Activated T-helper 2 cell treated with anti-CD3 and anti-CD28 coated beads, Interferon-gamma antibody, Interleukin-2, Interleukin-4, amounts not matched to agents 10 μg/mL and 5 μg/mL and 100 μg/mL, durations not matched to agents 14 hours and 24 hours and 36 hours (primary cell): ENCODE measurements at regions of chr7 and their contacts with region 1.

Region 1: DNA sequence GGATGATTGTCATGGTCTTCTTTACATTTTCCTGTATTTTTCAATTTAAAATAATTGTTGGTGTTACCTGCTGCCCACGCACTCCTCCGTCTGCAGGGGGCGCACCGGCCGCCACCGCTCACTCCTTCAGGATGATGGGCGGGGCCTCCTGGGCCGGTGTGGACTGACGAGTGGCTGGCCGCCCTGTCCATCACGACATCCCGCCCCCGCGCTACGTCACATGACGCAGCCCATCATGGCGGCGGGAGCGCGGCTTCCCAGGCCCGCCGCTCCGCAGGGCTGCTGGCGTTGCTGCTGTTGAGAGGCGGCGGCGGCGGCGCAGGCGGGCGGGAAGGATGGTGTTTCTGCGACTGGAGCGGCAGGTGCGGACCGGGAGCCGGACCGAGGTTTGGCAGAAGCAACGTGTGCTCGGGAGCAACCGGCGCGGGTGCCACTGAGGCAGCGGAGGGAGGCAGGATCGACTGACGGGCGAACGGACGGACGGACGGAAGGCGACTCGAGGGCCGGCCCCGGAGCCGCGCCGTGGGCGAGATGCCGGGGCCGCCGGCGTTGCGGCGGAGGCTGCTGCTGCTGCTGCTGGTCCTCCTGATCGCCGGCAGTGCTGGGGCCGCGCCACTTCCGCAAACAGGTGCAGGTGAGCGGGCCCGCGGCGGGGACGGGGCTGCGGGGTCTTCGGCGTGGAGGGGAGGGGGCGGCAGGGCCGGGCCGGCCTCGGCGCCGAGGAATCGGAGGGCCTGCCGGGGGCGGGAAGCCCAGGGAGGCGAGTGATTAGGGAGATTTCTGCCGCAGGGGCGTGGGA is at the start of gene LMTK2:
- DNase-seq: peak; percentile 92
- H3K4me3 Mint-ChIP-seq: peak within 1 kb of the TSS; percentile 95
- H3K27ac Mint-ChIP-seq: peak within 1 kb of the TSS; percentile 87
- H3K4me1 Mint-ChIP-seq: peaks cover 20% of the 10 kb centered on the region
- H3K27me3 Mint-ChIP-seq: peaks cover 1% of the 10 kb centered on the region
- total RNA-seq, gene LMTK2: 14.7 and 15.0 TPM in 2 replicates

Region 2: DNA sequence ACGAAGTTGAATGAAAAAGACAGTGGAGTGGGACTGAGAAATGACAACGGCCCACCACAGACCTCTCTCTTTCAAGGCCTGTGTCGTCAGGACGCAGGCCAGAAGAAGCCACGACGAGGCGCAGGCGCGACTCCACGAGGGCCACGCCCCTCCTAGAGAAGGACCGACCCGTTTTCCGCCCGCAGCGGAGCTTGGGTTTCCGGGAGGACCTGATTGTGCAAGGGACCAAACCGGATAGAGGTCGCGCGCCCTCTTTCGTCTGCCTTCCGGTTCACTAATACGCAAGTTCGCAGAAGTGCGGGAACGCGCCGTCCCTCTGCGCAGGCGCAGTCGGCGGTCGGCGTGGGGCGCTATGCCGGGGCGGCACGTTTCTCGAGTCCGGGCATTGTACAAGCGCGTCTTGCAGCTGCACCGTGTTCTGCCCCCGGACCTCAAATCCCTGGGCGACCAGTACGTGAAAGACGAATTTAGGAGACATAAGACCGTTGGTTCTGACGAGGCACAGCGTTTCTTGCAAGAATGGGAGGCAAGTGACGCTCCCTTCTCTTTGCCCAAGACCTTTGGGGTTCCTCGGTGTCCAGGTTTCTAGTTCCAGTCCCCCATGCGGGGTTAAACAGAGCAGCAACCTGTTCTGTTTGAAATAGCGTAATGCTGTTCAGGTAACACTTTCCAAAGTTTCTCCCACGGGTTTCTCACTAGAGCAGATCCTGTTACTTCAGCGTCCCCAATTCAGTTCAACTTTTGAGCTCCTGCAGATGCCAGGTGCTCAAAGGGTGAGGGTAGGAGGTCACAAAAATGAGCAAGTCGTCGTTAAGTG is 989.3 kb before region 1 on chr7 and contains the start of gene SDHAF3:
- intact Hi-C with region 1: loop called (anchors 2 kb)
- DNase-seq: peak; percentile 97
- H3K4me3 Mint-ChIP-seq: peak within 1 kb of the TSS; percentile 95
- H3K27ac Mint-ChIP-seq: peak within 1 kb of the TSS; percentile 90
- H3K4me1 Mint-ChIP-seq: peaks cover 37% of the 10 kb centered on the region
- H3K27me3 Mint-ChIP-seq: no peaks in the 10 kb centered on the region
- total RNA-seq, gene SDHAF3: 23.7 and 26.9 TPM in 2 replicates

Region 3: GRCh38 chr7:97961908-97962307 is 144.9 kb before region 1 on chr7:
- intact Hi-C with region 1: no loop called
- DNase-seq: no peak
- H3K4me3 Mint-ChIP-seq: no peak overlapping the region
- H3K27ac Mint-ChIP-seq: no peak overlapping the region
- H3K4me1 Mint-ChIP-seq: no peaks in the 10 kb centered on the region
- H3K27me3 Mint-ChIP-seq: no peaks in the 10 kb centered on the region

Region 4: GRCh38 chr7:98091061-98091460 is 15.8 kb before region 1 on chr7:
- intact Hi-C with region 1: no loop called
- DNase-seq: no peak
- H3K4me3 Mint-ChIP-seq: no peak overlapping the region
- H3K27ac Mint-ChIP-seq: no peak overlapping the region
- H3K4me1 Mint-ChIP-seq: no peaks in the 10 kb centered on the region
- H3K27me3 Mint-ChIP-seq: peaks cover 6% of the 10 kb centered on the region

Region 5: GRCh38 chr7:98133181-98133580 is 26.3 kb after region 1 on chr7:
- intact Hi-C with region 1: loop called (anchors 2 kb)
- DNase-seq: no peak
- H3K4me3 Mint-ChIP-seq: peak overlapping the region; percentile 35
- H3K27ac Mint-ChIP-seq: peak overlapping the region; percentile 26
- H3K4me1 Mint-ChIP-seq: peaks cover 30% of the 10 kb centered on the region
- H3K27me3 Mint-ChIP-seq: peaks cover 12% of the 10 kb centered on the region

Region 6: DNA sequence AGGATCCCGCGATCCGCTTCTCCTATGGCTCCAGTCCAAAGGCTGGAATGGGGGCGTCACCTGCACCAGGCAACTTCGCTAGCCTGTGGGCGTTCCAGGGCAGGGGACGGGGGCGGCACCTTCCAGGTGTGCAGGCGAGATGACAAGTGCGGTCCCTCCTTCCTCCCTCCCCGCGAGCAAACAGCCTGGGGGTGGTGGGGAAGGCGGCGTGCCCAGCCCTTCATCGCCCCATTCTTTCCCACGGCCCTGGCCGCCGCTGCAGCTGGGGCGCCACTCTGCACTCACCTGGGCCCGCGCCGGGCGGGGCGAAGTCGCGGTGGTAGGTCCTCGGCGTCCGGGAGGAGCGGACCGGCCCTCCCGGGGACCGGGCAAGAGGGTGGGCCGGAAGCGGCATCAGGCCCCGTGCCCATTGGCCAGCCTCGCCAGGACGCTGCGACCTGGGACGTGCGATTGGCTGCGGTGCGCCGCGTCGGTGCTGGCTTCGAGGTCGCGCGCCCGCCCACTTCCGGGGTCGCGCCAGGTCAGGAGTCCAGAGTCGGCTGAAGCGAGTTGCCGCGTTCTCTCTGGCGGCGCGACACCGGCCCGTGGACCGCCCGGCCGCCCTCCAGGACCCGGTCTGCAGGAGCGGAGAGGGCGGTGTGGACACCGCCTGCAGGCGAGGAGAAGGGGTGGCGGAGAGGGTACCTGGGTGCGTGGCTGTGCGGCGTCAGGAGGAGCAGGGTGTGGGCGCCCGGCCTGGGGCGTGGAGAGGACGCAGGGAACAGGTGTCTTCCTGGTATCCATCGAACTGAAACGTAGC is 145.2 kb after region 1 on chr7 and contains the start of gene TECPR1:
- intact Hi-C with region 1: loop called (anchors 5 kb)
- DNase-seq: peak; percentile 90
- H3K4me3 Mint-ChIP-seq: peak within 1 kb of the TSS; percentile 98
- H3K27ac Mint-ChIP-seq: peak within 1 kb of the TSS; percentile 96
- H3K4me1 Mint-ChIP-seq: peaks cover 45% of the 10 kb centered on the region
- H3K27me3 Mint-ChIP-seq: no peaks in the 10 kb centered on the region
- total RNA-seq, gene TECPR1: 45.4 and 45.8 TPM in 2 replicates

Region 7: DNA sequence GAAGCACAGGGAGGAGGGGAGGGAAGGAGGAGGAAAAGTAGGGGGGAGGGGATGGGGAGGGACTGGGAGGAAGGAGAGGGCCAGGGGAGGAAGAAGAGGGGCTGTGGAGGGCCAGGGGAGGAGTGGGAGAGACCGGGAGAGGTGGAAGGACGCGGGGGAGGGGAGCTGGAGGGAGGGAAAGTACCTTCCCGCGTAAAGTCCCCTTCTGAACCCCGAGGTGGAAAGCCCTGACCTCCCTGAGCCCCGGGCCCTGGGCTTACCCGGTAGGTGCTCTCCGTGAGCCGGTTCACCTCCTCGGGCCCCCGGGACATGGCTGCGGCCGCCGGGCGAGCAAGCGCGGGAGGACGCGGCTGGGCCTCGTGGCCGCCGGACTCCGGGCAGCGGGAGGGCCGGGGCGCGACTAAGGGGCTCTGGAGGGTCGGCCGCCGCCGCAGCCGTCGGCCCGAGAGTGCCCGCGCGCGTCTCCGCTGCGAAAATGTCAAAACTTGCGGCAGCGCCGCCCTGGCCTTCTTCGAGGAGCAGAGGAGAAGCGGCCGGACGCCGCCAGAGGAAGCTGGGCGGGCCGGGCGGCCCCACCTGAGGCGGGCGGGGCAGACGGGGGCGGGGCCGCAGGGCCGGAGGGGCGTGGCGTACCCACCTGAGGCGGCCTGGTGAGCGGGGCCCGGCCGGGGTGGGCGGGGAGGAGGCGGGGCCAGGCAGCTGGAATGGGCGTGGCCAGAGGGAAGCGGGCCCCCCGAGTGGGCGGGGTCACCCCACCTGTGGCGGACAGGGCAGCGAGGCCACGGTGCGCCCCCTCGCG is 293.9 kb after region 1 on chr7 and contains the start of gene BAIAP2L1:
- intact Hi-C with region 1: loop called (anchors 5 kb)
- DNase-seq: peak; percentile 68
- H3K4me3 Mint-ChIP-seq: peak within 1 kb of the TSS; percentile 49
- H3K27ac Mint-ChIP-seq: no peak within 1 kb of the TSS
- H3K4me1 Mint-ChIP-seq: peaks cover 2% of the 10 kb centered on the region
- H3K27me3 Mint-ChIP-seq: peaks cover 15% of the 10 kb centered on the region
- total RNA-seq, gene BAIAP2L1: 1.9 TPM in 2 replicates